ENCODE measurements at regions of chr19 and their contacts with region 1.

Region 1: DNA sequence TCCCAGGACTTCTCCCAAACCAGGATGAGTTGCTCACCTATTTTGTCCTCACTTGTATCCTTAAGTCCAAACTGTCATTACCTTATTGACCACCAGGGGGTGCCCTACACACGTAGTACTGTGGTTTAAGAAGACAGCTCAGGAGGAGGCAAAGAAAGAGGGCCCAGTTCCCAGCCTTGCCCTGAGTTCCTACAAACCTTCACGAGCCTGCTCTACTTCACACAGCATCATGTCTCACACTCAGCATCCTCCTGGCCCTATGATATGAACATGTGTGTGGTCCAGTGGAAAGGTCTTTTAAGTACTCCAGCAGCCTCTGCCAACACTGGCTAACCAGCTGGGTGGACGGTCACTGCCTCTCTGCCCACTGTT is 8.1 kb upstream of the ZNF784 start:
- DNase-seq: peak; percentile 84 to 89
- H3K4me3 ChIP-seq: no peak overlapping the region
- H3K27ac ChIP-seq: no peak overlapping the region
- H3K4me1 ChIP-seq: peaks cover 12% of the 10 kb centered on the region
- H3K27me3 ChIP-seq: no peaks in the 10 kb centered on the region
- CTCF ChIP-seq: peak; percentile 96

Region 2: GRCh38 chr19:54882758-54883157 is 749.7 kb before region 1 on chr19:
- CTCF ChIA-PET with region 1: no interaction called
- POLR2A ChIA-PET with region 1: no interaction called
- intact Hi-C with region 1: loop called (anchors 2 kb)
- DNase-seq: no peak
- H3K4me3 ChIP-seq: no peak overlapping the region
- H3K27ac ChIP-seq: no peak overlapping the region
- H3K4me1 ChIP-seq: no peaks in the 10 kb centered on the region
- H3K27me3 ChIP-seq: peaks cover 31% of the 10 kb centered on the region
- CTCF ChIP-seq: no peak

Region 3: GRCh38 chr19:55516878-55517620 is 115.4 kb before region 1 on chr19:
- CTCF ChIA-PET with region 1: interaction called, 7 read pairs
- POLR2A ChIA-PET with region 1: interaction called, 6 read pairs
- intact Hi-C with region 1: loop called (anchors 1 kb)
- DNase-seq: peak; percentile 83 to 97
- H3K4me3 ChIP-seq: peak overlapping the region; percentile 60; the same call in 1 of the 2 replicates
- H3K27ac ChIP-seq: no peak overlapping the region
- H3K4me1 ChIP-seq: no peaks in the 10 kb centered on the region
- H3K27me3 ChIP-seq: peaks cover 17% of the 10 kb centered on the region
- CTCF ChIP-seq: peak; percentile 94

Region 4: DNA sequence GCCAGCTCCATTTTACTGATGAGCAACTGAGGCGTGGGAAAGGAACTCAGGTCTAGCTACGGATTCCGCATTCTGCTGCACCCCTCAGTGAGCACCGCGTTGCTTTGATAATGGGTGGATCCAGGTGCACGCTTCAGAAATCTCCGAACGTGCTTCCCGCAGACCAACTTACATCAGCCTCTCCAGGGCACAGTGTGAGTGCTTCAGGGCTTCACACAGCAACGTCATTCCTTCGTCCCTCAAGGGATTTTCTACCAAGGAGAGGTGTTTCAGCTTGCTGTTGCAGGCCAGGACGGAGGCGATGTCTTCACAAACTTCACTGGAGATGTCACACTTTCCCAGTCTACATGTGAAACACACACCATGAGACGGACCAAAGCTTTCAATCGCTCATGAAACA is 84.1 kb after region 1 on chr19:
- CTCF ChIA-PET with region 1: no interaction called
- POLR2A ChIA-PET with region 1: no interaction called
- intact Hi-C with region 1: no loop called
- DNase-seq: no peak
- H3K4me3 ChIP-seq: no peak overlapping the region
- H3K27ac ChIP-seq: no peak overlapping the region
- H3K4me1 ChIP-seq: no peaks in the 10 kb centered on the region
- H3K27me3 ChIP-seq: peaks cover 71% of the 10 kb centered on the region
- CTCF ChIP-seq: no peak

Region 5: GRCh38 chr19:56080669-56081401 is 448.4 kb after region 1 on chr19:
- CTCF ChIA-PET with region 1: no interaction called
- POLR2A ChIA-PET with region 1: no interaction called
- intact Hi-C with region 1: loop called (anchors 10 kb)
- DNase-seq: peak in 1 of 2 experiments; percentile 77
- H3K4me3 ChIP-seq: no peak overlapping the region
- H3K27ac ChIP-seq: no peak overlapping the region
- H3K4me1 ChIP-seq: no peaks in the 10 kb centered on the region
- H3K27me3 ChIP-seq: no peaks in the 10 kb centered on the region
- CTCF ChIP-seq: peak; percentile 64

Region 6: DNA sequence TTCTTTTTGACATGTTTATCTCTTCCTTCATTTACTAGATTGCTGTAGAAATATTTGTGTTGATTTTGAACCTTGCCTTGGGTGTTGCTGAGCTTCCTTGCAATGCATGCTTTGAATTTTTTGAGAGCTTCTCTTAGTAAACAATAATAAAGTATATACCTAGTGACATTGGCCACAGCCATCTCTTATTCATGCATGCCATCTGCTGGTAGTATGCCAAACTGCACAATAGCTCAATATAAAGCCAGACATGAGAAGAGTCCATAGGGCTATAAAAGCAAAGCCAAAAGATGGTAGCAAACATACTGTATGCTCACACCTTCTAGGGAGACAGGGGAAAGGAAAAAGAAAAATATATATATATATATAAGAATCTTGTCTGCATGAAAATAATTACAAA is 701.1 kb after region 1 on chr19:
- CTCF ChIA-PET with region 1: interaction called, 10 read pairs
- POLR2A ChIA-PET with region 1: interaction called, 4 read pairs
- intact Hi-C with region 1: loop called (anchors 5 kb)
- DNase-seq: peak; percentile 61 to 66
- H3K4me3 ChIP-seq: no peak overlapping the region
- H3K27ac ChIP-seq: no peak overlapping the region
- H3K4me1 ChIP-seq: no peaks in the 10 kb centered on the region
- H3K27me3 ChIP-seq: peaks cover 41% of the 10 kb centered on the region
- CTCF ChIP-seq: peak; percentile 95

Region 7: DNA sequence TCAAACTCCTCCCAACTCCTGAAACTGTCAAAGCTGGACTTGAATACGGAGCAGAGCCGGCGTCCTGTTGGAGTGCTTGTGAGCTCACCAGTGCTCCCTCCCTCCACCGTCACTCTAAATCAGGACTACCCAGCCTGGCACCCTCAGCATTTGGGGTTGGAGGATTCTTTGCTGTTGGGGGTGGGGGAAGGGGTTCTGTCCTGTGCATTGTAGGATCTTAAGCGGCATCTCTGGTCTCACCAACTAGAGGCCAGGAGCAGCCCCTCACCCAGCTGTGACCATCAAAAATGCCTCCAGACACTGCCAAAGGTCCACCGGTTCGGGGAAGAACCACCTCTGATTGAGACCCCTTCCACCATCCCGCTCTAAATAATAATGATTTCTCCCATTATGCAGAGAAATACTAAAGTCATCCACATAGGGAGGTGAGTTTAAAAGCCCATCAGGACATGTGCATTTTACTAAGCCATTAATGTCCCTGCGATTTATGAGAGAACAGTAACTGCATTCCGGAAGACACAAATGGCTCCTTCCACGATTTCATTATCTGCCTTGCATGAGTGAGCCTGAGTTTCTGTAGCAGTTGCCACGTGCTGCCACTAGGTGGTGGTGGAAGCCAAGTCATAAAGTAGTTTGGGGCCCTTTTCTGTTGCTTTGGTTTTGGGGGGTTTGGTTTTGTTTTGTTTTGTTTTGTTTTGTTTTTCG is 1471.3 kb after region 1 on chr19:
- CTCF ChIA-PET with region 1: no interaction called
- POLR2A ChIA-PET with region 1: no interaction called
- intact Hi-C with region 1: loop called (anchors 10 kb)
- DNase-seq: peak; percentile 35 to 49
- H3K4me3 ChIP-seq: peak overlapping the region; percentile 3; the same call in 1 of the 2 replicates
- H3K27ac ChIP-seq: no peak overlapping the region
- H3K4me1 ChIP-seq: no peaks in the 10 kb centered on the region
- H3K27me3 ChIP-seq: no peaks in the 10 kb centered on the region
- CTCF ChIP-seq: peak; percentile 91